Activated CD4-positive, alpha-beta memory T cell treated with anti-CD3 and anti-CD28 coated beads for 36 hours (primary cell): ENCODE measurements at regions of chr19 and their contacts with region 1.

Region 1: GRCh38 chr19:41570639-41571112 is 5.3 kb upstream of the CEACAM21 start:
- DNase-seq: peak; percentile 90
- H3K4me3 Mint-ChIP-seq: no peak overlapping the region
- H3K27ac Mint-ChIP-seq: no peak overlapping the region
- H3K4me1 Mint-ChIP-seq: peaks cover 43% of the 10 kb centered on the region
- H3K27me3 Mint-ChIP-seq: no peaks in the 10 kb centered on the region

Region 2: DNA sequence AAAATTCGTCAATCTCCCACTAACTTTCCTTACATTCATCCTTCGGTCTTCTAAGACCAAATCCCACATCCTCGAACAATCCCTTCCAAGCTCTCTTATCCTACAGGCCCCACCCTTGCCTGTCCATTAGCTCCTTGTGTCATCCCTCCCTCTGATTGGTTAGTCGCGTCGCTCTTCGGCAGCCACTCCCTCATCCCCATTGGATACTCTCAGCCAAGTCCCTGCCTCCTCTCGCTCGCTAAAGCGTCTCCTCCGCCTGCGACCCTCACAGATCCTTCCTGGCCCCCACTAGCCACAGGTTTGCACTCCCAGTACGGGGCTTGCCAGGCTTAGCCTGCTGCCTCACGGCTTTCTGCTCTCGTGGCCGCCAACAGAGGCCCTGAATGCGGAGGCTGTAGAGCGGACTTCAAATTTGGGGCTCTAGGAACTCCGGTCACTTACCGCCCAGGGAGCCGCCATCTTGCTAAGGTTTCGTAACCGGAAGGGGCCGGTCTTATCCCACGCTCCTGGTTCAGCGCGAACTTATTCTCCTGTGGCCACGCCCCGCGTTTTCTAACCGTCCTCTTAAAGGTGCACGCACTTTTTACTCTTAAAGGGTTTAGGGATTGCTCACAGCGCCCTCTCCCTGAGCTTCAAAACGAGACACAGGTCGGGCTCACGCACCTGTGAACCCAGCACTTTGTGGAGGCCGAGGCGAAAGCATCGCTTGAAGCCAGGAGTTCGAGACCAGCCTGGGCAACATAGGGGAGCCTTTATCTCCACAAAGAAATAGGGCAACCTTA is 131.0 kb before region 1 on chr19 and contains the start of gene DMAC2:
- CTCF ChIA-PET with region 1: interaction called, 33 read pairs
- POLR2A ChIA-PET with region 1: no interaction called
- intact Hi-C with region 1: no loop called
- DNase-seq: peak; percentile 98
- H3K4me3 Mint-ChIP-seq: no peak within 1 kb of the TSS
- H3K27ac Mint-ChIP-seq: no peak within 1 kb of the TSS
- H3K4me1 Mint-ChIP-seq: peaks cover 15% of the 10 kb centered on the region
- H3K27me3 Mint-ChIP-seq: no peaks in the 10 kb centered on the region
- total RNA-seq, gene DMAC2: 47.5 to 47.8 TPM

Region 3: DNA sequence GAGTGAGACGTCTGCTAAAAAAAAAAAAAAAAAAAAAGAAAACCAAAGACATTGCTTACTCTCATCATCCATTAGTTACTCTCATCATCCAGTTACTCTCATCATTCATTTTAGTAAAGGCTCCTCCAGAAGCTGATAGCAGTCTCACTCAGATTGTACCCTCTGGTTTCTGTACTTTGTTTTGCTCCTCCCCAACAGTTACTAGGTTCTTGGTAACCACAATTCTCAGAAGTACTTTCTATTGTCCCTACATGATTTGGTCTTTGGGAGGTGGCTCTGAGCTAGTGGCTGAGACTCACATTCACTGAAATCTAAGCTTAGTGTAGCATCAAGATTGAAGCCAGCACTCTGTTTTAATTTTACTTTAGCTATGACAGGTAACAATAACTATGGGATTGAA is 113.4 kb before region 1 on chr19:
- CTCF ChIA-PET with region 1: interaction called, 281 read pairs
- POLR2A ChIA-PET with region 1: no interaction called
- intact Hi-C with region 1: no loop called
- DNase-seq: no peak
- H3K4me3 Mint-ChIP-seq: no peak overlapping the region
- H3K27ac Mint-ChIP-seq: peak overlapping the region; percentile 57
- H3K4me1 Mint-ChIP-seq: peaks cover 15% of the 10 kb centered on the region
- H3K27me3 Mint-ChIP-seq: peaks cover 2% of the 10 kb centered on the region

Region 4: GRCh38 chr19:41548954-41549688 is 21.6 kb before region 1 on chr19:
- CTCF ChIA-PET with region 1: interaction called, 31 read pairs
- POLR2A ChIA-PET with region 1: interaction called, 13 read pairs
- intact Hi-C with region 1: no loop called
- DNase-seq: peak; percentile 88
- H3K4me3 Mint-ChIP-seq: peak overlapping the region; percentile 98
- H3K27ac Mint-ChIP-seq: peak overlapping the region; percentile 96
- H3K4me1 Mint-ChIP-seq: peaks cover 61% of the 10 kb centered on the region
- H3K27me3 Mint-ChIP-seq: no peaks in the 10 kb centered on the region

Region 5: DNA sequence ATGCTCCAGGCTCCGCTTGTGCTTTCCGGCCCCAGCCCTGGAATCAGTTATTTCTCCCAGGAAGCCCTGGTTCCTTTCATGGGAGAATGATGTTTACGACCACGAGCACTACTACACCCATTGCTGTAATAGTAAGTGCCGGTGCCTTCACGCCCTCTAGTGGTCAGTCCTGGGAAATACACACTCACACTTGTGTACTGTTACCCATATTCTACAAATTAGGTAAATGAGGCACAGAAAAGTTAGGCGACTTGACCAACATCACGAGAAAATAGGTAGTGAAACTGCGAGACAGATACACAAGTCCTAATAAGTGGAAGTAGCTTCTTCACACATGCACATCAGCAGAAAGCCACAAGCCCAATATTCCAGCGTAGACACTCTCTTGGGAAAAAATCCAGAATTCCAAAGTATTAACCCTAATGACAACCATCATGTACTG is 26.9 kb after region 1 on chr19:
- CTCF ChIA-PET with region 1: interaction called, 49 read pairs
- POLR2A ChIA-PET with region 1: interaction called, 4 read pairs
- intact Hi-C with region 1: loop called (anchors 2 kb)
- DNase-seq: peak; percentile 80
- H3K4me3 Mint-ChIP-seq: peak overlapping the region; percentile 42
- H3K27ac Mint-ChIP-seq: no peak overlapping the region
- H3K4me1 Mint-ChIP-seq: peaks cover 12% of the 10 kb centered on the region
- H3K27me3 Mint-ChIP-seq: peaks cover 16% of the 10 kb centered on the region

Region 6: GRCh38 chr19:41626877-41627276 is 56.2 kb after region 1 on chr19 and contains the start of gene CEACAM4:
- CTCF ChIA-PET with region 1: no interaction called
- POLR2A ChIA-PET with region 1: no interaction called
- intact Hi-C with region 1: no loop called
- DNase-seq: no peak
- H3K4me3 Mint-ChIP-seq: no peak within 1 kb of the TSS
- H3K27ac Mint-ChIP-seq: no peak within 1 kb of the TSS
- H3K4me1 Mint-ChIP-seq: no peaks in the 10 kb centered on the region
- H3K27me3 Mint-ChIP-seq: peaks cover 35% of the 10 kb centered on the region
- total RNA-seq, gene CEACAM4: not detected